ENCODE measurements at regions of chr11 and their contacts with region 1.

Region 1: DNA sequence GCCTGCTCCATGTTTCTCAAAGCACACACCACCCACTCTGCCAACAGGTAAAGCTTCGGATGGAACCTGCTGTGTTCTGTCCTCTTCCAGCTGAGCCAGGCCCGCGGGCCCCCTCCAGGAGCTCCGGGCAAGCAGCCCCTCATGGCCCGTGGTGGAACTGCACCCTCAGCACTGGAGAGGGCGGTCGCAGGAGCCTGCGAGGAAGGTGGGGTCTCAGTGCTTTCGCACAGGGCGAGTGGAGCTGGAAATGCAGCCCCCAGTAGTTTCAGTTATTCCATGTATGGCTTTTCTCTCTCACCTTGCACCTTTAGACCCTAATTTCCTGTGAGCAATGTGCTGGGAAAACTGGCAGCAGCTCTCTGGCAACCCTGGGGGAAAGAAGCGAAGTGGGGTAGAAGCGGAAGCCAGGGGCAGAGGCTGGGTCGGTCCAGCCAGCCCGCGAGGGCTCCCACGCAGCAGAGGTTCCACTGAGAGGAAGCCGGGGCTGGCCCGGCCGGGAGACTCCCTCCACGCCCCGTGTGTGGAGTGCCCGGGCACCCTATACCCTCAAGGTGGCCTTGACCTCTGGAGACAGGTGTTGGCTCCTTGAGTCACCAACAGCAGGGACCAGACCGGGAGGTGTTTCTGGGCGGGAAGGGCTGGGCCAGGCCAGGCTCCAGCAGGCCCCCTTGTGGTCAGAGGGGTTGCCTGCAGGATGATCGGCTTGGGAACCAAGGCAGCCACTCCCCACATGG is 119.9 kb upstream of the TMEM45B start:
- DNase-seq: peak; percentile 21
- ATAC-seq: peak; percentile 90
- H3K4me3 ChIP-seq: no peak overlapping the region
- H3K27ac ChIP-seq: no peak overlapping the region
- H3K4me1 ChIP-seq: peaks cover 0 to 5% of the 10 kb centered on the region in 2 experiments; a peak in 1 of 4 replicates
- H3K27me3 ChIP-seq: no peaks in the 10 kb centered on the region
- CTCF ChIP-seq: peak; percentile 69 to 80 (median 79)
- POLR2A ChIP-seq: no peak
- RAD21 ChIP-seq: peak; percentile 78

Region 2: DNA sequence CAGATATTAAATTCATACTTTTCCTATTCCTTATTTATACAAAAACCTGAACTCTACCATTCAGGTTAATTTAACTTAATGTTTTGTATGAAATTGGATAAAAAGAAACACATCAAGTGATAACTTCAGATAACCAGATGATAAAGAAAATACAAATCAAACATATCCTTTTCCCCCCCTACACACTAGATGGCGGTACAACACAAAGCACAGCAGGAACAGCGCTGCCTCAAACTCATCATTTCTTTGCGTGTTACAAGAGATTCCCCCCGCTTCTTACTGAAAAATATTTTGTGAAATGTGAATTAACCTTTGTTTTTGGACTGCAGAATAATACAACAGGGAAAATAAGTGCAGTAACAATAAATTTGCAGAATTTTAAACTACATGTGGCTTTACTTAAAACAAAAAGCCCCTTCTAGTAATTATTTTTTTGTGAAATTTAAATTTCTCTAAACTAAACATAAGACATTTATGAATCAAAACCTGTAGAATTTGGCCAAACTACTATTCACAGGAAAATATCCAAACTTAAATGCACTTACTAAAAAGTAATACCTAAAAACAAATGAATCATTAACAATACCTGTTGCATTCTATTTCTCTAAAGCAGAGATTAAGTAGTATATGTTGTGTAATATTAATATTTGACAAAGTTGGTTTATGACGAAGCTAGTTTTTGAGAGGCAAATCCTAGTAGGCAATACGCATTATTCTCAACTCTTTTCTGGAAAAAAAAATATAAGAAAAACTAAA is 578.0 kb before region 1 on chr11:
- CTCF ChIA-PET with region 1: no interaction called
- POLR2A ChIA-PET with region 1: no interaction called
- RAD21 ChIA-PET with region 1: no interaction called
- intact Hi-C with region 1: loop called (anchors 1 kb)
- DNase-seq: peak; percentile 63
- ATAC-seq: peak; percentile 67; the same call in 1 of the 2 replicates
- H3K4me3 ChIP-seq: no peak overlapping the region
- H3K27ac ChIP-seq: no peak overlapping the region
- H3K4me1 ChIP-seq: peaks cover 5 to 12% of the 10 kb centered on the region in 2 experiments; a peak in 3 of 4 replicates
- H3K27me3 ChIP-seq: no peaks in the 10 kb centered on the region
- CTCF ChIP-seq: peak; percentile 71 to 95 (median 92)
- POLR2A ChIP-seq: no peak
- RAD21 ChIP-seq: peak; percentile 97

Region 3: GRCh38 chr11:129364143-129364654 is 331.5 kb before region 1 on chr11:
- CTCF ChIA-PET with region 1: interaction called, 5 read pairs
- POLR2A ChIA-PET with region 1: no interaction called
- RAD21 ChIA-PET with region 1: no interaction called
- intact Hi-C with region 1: loop called (anchors 5 kb)
- DNase-seq: peak; percentile 85
- ATAC-seq: peak; percentile 99
- H3K4me3 ChIP-seq: no peak overlapping the region
- H3K27ac ChIP-seq: no peak overlapping the region
- H3K4me1 ChIP-seq: peaks cover 0 to 20% of the 10 kb centered on the region in 2 experiments; a peak in 2 of 4 replicates
- H3K27me3 ChIP-seq: peaks cover 32% of the 10 kb centered on the region
- CTCF ChIP-seq: peak; percentile 100
- POLR2A ChIP-seq: no peak
- RAD21 ChIP-seq: peak; percentile 99

Region 4: GRCh38 chr11:129375751-129376657 is 319.7 kb before region 1 on chr11 and contains the start of gene BARX2:
- CTCF ChIA-PET with region 1: interaction called, 4 read pairs
- POLR2A ChIA-PET with region 1: no interaction called
- RAD21 ChIA-PET with region 1: no interaction called
- intact Hi-C with region 1: loop called (anchors 1 kb)
- DNase-seq: peak; percentile 26
- ATAC-seq: peak; percentile 82
- H3K4me3 ChIP-seq: peak within 1 kb of the TSS; percentile 33 to 55
- H3K27ac ChIP-seq: no peak within 1 kb of the TSS
- H3K4me1 ChIP-seq: peaks cover 0 to 16% of the 10 kb centered on the region in 2 experiments; a peak in 2 of 4 replicates
- H3K27me3 ChIP-seq: peaks cover 50% of the 10 kb centered on the region; the same call in 1 of the 2 replicates
- CTCF ChIP-seq: peak; percentile 38 to 92 (median 51)
- POLR2A ChIP-seq: no peak
- RAD21 ChIP-seq: peak; percentile 86
- total RNA-seq, gene BARX2: 0.12 TPM

Measured in HCT116 (cell line).